H1 (cell line): ENCODE measurements at regions of chr3 and their contacts with region 1.

Region 1: DNA sequence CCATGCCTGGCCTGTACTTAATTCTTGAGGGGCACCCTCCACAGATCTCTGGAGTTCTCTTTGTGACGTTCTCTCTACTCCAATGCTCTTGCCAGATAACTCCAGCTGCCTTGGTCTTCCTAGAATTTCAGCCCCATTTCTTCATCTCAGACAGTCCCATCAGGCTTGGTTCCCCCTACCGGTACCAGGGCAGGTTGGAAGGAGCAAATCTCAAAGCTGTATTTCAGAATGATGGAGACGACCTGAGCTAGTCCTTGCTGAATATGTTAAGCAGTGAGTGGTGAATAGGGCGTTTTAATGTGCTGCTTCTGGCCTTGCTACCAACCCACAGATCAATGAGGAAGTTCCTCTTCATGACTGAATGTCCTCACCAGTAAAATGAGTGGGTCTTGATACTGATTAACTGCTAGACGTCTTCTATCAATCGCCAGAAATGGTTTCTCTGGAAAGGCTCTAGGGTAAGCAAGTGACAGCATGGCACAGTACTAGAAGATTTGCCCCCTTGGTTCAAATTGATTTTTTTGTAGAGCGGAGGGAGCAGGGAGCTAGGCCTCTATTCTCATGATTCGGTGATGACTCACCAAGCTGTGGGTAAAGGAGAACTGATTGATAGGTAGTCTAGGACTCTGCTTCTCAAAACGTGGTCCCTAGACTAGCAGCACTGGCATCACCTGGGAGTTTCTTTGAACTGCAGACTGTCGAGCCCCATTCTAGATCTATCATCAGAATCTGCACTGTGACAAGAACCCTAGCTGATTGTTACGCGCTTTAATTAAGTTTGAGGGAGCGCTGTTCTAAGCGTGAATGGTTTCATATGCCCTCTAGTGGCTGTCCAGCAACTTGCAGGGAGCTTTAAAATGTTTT is 67.8 kb downstream of the UBP1 start:
- DNase-seq: peak in 1 of 2 experiments; percentile 55
- H3K4me3 ChIP-seq: no peak overlapping the region
- H3K27ac ChIP-seq: no peak overlapping the region
- H3K4me1 ChIP-seq: no peaks in the 10 kb centered on the region
- H3K27me3 ChIP-seq: no peaks in the 10 kb centered on the region
- CTCF ChIP-seq: peak in 2 of 3 experiments; percentile 82 to 89; a peak in 3 of 4 replicates
- EP300 ChIP-seq: no peak
- POLR2A ChIP-seq: no peak
- RAD21 ChIP-seq: peak; percentile 88 to 90

Region 2: DNA sequence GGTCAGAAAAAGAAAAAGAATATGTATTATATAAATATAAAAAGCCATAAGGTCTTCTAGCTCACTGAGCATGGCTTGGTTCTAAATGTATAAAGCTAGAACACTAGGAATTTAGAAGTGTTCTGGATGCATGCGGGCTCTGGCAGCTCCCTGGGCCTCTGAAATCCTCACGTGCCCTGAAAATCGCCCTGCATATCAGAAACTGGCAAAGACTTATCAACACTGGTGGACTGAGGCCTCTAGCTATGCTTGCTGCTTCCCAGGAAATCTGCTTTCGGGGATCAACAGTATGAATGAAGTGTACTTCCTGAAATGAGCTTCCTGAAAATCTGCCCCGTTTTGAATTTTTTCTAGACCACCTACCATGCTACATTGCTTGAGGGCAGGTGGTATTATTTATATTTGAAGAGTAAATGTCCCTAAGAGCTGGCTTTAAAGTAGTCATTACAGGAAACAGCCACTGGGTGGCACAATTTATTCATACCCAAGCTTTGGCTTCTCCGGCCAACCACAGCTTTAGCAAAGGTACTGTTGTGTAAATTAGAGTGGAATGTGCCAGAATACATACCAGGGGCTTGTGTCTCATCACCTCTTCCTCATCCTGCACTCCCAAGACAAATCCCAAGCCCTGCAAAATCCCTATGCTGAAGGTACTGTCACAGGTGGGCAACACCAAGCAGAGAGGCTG is 241.0 kb before region 1 on chr3:
- CTCF ChIA-PET with region 1: interaction called, 104 read pairs
- POLR2A ChIA-PET with region 1: interaction called, 3 read pairs
- DNase-seq: peak; percentile 41 to 64
- H3K4me3 ChIP-seq: no peak overlapping the region
- H3K27ac ChIP-seq: no peak overlapping the region
- H3K4me1 ChIP-seq: peaks cover 0 to 6% (median 5%) of the 10 kb centered on the region in 4 experiments; a peak in 6 of 7 replicates
- H3K27me3 ChIP-seq: no peaks in the 10 kb centered on the region
- CTCF ChIP-seq: peak in 2 of 3 experiments; percentile 68 to 70; a peak in 3 of 4 replicates
- EP300 ChIP-seq: no peak
- POLR2A ChIP-seq: no peak
- RAD21 ChIP-seq: peak; percentile 90 to 91

Region 3: DNA sequence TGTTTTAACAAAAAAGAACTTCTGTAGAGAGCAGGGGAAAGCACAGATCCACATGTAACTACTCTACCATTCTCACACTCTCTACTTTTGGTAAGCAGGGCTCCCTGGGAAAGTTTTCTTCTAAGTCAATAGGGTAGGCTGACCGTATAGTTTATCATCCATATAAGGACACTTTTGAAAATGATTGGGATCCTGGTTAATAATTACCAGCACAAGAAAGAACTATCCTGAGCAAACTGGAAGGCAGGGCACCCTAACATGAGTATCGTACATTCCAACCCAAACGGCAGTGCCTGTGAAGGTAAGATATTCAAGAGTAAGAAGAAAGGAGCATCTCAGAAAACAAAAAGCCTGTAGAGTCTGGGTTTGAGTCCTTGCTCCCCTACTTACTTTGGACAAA is 175.9 kb before region 1 on chr3:
- CTCF ChIA-PET with region 1: interaction called, 13 read pairs
- POLR2A ChIA-PET with region 1: no interaction called
- DNase-seq: no peak
- H3K4me3 ChIP-seq: no peak overlapping the region
- H3K27ac ChIP-seq: no peak overlapping the region
- H3K4me1 ChIP-seq: no peaks in the 10 kb centered on the region
- H3K27me3 ChIP-seq: no peaks in the 10 kb centered on the region
- CTCF ChIP-seq: no peak
- EP300 ChIP-seq: no peak
- POLR2A ChIP-seq: no peak
- RAD21 ChIP-seq: no peak

Region 4: DNA sequence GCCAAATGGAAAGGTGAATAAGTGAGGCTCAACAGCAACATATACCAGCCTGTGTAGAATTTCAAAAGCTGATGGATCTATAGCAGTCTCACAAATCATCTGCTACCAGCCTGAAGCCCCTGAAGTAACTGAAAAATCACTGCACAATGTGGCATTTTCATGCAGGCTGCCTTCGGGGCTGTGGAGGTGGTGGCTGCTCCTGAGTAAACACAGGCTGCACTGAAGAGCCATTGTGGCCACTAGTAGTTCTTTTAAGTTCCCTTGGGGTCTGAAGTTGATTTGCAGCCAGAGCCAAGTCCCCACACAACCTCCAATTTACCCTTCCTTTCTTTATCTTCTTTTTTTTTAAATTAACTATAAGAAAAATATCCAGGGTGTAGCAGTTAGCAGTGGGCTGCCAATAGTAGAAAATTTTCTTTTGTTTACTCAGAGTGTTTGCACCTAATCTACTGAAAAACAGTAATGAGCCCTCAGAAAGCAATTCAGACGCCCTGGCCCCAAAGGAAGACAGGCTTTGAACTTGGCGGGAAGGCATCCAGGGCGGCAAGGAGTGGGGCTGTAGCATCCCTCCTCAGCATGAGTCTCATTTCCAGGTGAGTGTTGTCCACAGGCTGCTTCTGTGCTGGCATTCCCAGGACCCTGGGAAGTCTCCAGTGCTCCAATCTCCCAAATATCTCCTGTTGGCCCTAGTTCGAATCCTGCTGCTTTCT is 140.5 kb before region 1 on chr3:
- CTCF ChIA-PET with region 1: no interaction called
- POLR2A ChIA-PET with region 1: no interaction called
- DNase-seq: no peak
- H3K4me3 ChIP-seq: no peak overlapping the region
- H3K27ac ChIP-seq: no peak overlapping the region
- H3K4me1 ChIP-seq: no peaks in the 10 kb centered on the region
- H3K27me3 ChIP-seq: no peaks in the 10 kb centered on the region
- CTCF ChIP-seq: no peak
- EP300 ChIP-seq: no peak
- POLR2A ChIP-seq: no peak
- RAD21 ChIP-seq: no peak

Region 5: DNA sequence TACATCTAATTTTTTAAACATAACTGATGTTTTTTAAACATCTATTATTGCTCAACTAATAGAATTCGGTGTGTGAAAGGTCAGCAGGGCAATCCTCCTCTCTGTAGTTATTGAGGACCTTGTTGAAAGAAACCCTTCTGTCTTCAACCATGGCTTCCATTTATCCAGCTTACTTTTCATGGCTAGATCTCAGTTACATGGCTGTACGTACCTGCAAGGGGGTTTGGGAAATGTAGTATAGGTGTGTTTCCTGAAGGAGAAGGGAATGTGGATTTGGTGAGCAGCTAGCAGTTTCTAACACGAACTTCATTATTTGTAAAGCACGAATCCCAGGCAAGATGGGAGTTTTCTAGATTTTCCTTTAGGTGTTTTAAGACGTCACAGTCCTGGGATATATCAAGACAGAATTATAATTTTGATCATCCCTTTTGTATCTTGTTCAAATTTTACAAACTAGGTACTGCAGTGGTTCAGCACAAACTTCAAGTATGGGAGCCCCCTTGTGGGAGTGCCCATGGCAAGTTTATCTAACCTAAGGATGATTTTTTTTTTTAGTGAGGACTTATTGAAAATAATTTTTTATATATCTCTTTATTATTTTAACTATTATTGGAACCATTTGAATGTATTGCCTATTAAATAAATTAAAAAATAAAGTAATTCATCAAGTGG is 53.6 kb before region 1 on chr3:
- CTCF ChIA-PET with region 1: no interaction called
- POLR2A ChIA-PET with region 1: no interaction called
- DNase-seq: no peak
- H3K4me3 ChIP-seq: no peak overlapping the region
- H3K27ac ChIP-seq: no peak overlapping the region
- H3K4me1 ChIP-seq: no peaks in the 10 kb centered on the region; a peak in 1 of 7 replicates
- H3K27me3 ChIP-seq: no peaks in the 10 kb centered on the region
- CTCF ChIP-seq: peak in 1 of 3 experiments; percentile 32; a peak in 1 of 4 replicates
- EP300 ChIP-seq: no peak
- POLR2A ChIP-seq: no peak
- RAD21 ChIP-seq: peak in 1 of 2 experiments; percentile 30; a peak in 3 of 4 replicates

Region 6: GRCh38 chr3:33360136-33360825 is 12.2 kb before region 1 on chr3:
- CTCF ChIA-PET with region 1: interaction called, 35 read pairs
- POLR2A ChIA-PET with region 1: no interaction called
- DNase-seq: no peak
- H3K4me3 ChIP-seq: no peak overlapping the region
- H3K27ac ChIP-seq: no peak overlapping the region
- H3K4me1 ChIP-seq: no peaks in the 10 kb centered on the region
- H3K27me3 ChIP-seq: no peaks in the 10 kb centered on the region
- CTCF ChIP-seq: no peak
- EP300 ChIP-seq: no peak
- POLR2A ChIP-seq: no peak
- RAD21 ChIP-seq: no peak

Region 7: GRCh38 chr3:33391255-33391995 is 19.0 kb after region 1 on chr3:
- CTCF ChIA-PET with region 1: interaction called, 24 read pairs
- POLR2A ChIA-PET with region 1: no interaction called
- DNase-seq: no peak
- H3K4me3 ChIP-seq: no peak overlapping the region
- H3K27ac ChIP-seq: no peak overlapping the region
- H3K4me1 ChIP-seq: no peaks in the 10 kb centered on the region
- H3K27me3 ChIP-seq: no peaks in the 10 kb centered on the region
- CTCF ChIP-seq: no peak
- EP300 ChIP-seq: no peak
- POLR2A ChIP-seq: no peak
- RAD21 ChIP-seq: no peak